Psoas muscle (tissue), 8 donors: ENCODE measurements at regions of chr2 and their contacts with region 1.

Region 1: DNA sequence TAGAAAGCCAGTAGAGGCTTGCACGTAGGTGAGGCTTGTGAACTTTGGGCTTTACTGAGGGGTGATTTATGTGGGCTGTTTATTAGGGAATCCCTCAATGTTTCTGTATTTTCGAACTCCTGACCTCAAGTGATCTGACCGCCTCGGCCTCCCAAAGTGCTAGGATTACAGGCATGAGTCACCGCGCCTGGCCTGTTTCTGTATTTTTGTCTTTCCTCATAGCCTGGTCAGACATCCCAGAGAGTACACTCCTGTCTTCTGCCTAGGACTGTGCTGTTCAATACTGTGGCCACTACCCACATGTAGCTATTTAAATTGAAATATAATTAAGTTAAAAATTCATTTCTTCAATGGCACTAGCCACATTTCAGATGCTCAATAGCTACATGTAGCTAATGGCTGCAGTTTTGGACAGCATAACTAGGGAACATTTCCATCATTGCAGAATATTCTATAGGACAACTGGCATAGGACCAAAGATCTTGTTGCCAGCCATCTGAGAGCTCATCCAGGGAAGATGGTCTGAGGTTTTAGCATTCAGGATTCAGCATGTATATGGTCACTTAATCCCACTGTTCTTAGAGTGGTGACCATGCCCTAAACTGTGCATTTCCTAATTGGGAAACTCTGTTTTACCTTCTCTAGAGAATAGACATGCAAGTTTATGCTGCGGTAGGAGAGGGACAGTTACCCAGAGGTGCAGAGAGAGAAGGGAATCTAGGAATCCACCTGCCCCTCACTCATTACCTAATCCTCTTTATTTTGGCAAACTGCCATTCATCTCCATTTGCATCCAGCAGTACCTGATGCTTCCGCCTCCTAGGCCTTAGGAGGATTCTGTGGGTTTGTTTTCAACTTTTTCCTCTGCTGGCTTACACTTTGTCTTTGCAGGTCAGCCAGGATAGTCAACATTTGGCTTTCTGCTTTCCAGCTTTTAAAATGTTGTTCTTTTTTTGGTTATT is 64.4 kb downstream of the LCLAT1 start:
- DNase-seq: peak; percentile 53 to 76
- ATAC-seq: peak; percentile 92 to 96 (median 96)
- H3K4me3 ChIP-seq: no peak overlapping the region
- H3K27ac ChIP-seq: peak overlapping the region; percentile 64
- H3K4me1 ChIP-seq: peaks cover 48% of the 10 kb centered on the region
- H3K27me3 ChIP-seq: no peaks in the 10 kb centered on the region
- CTCF ChIP-seq: no peak

Region 2: GRCh38 chr2:30447149-30448045 is 64.0 kb before region 1 on chr2 and contains the start of gene LCLAT1:
- intact Hi-C with region 1: loop called in 1 of 2 experiments (anchors 5 kb)
- DNase-seq: peak; percentile 84 to 90
- ATAC-seq: peak; percentile 93 to 97 (median 94)
- H3K4me3 ChIP-seq: peak within 1 kb of the TSS; percentile 99
- H3K27ac ChIP-seq: peak within 1 kb of the TSS; percentile 79
- H3K4me1 ChIP-seq: peaks cover 13% of the 10 kb centered on the region
- H3K27me3 ChIP-seq: no peaks in the 10 kb centered on the region
- CTCF ChIP-seq: no peak
- total RNA-seq, gene LCLAT1: 5.5 to 18.8 (median 8.2) TPM

Region 3: GRCh38 chr2:31347750-31348149 is 836.3 kb after region 1 on chr2:
- intact Hi-C with region 1: no loop called
- DNase-seq: peak in 1 of 2 donors; percentile 58
- ATAC-seq: peak in 3 of 4 donors; percentile 40 to 67 (median 41)
- H3K4me3 ChIP-seq: no peak overlapping the region
- H3K27ac ChIP-seq: no peak overlapping the region
- H3K4me1 ChIP-seq: no peaks in the 10 kb centered on the region
- H3K27me3 ChIP-seq: peaks cover 0 to 4% (median 1%) of the 10 kb centered on the region in 3 donors
- CTCF ChIP-seq: no peak